Heart right ventricle (tissue), 16 donors: ENCODE measurements at regions of chr14 and their contacts with region 1.

Region 1: GRCh38 chr14:68248481-68249255 is 429.1 kb downstream of the RAD51B start:
- DNase-seq: peak; percentile 23 to 31
- ATAC-seq: peak; percentile 51 to 79 (median 73)
- H3K4me3 ChIP-seq: no peak overlapping the region
- H3K27ac ChIP-seq: peak overlapping the region in 9 of 10 donors; percentile 77 to 94 (median 85)
- H3K4me1 ChIP-seq: peaks cover 27 to 85% (median 81%) of the 10 kb centered on the region in 9 donors
- H3K27me3 ChIP-seq: no peaks in the 10 kb centered on the region
- CTCF ChIP-seq: peak; percentile 61 to 76 (median 63)

Region 2: DNA sequence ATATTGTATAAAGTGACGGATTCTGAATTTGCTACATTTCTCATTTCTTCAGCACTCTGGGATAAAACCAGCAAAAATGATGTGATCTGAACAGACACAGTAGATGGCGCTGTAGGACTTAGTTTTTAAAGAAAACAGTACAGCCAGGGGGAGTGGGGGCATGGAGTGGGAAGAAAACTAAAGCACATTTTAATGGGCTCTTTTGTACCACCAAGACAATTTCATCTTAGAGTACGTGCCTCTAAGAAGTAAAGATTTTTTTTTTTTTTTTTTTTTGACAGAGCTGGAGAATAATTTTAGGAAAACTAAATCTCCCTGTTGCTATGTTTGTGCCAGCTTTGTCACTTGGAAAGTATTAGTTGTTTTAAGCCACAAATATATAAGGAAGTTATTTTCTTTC is 304.7 kb before region 1 on chr14:
- intact Hi-C with region 1: loop called in 8 of 10 experiments (anchors 2 to 10 kb)
- DNase-seq: peak in 1 of 2 donors; percentile 86
- ATAC-seq: peak in 7 of 8 donors; percentile 53 to 73 (median 66)
- H3K4me3 ChIP-seq: no peak overlapping the region
- H3K27ac ChIP-seq: peak overlapping the region in 3 of 10 donors; percentile 35 to 76 (median 59)
- H3K4me1 ChIP-seq: peaks cover 0 to 56% (median 19%) of the 10 kb centered on the region in 9 donors
- H3K27me3 ChIP-seq: no peaks in the 10 kb centered on the region
- CTCF ChIP-seq: peak; percentile 59 to 85 (median 74)

Region 3: DNA sequence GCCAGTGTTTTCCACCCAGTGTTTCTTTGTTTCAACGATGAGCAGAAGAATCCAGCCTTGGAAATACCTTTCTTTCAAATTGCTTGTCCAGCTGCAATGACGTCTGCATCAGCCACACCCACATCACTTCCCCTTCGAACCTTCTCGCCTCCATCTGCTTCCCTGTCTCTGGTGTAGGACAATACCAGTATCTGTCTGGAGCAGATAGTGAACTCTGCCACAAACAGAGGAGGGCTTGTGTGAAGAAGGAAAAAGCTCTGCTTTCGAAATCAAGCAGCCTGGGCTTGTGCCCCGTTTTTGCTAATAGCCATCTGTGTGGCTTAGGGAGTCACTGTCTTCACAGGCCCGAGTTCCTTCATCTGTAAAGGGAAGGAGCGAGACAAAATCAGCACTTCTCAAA is 128.8 kb after region 1 on chr14:
- intact Hi-C with region 1: loop called in 1 of 10 experiments (anchors 10 kb)
- DNase-seq: peak; percentile 54 to 77
- ATAC-seq: peak; percentile 84 to 95 (median 90)
- H3K4me3 ChIP-seq: peak overlapping the region in 1 of 10 donors; percentile 2
- H3K27ac ChIP-seq: peak overlapping the region; percentile 54 to 89 (median 80)
- H3K4me1 ChIP-seq: peaks cover 4 to 76% (median 38%) of the 10 kb centered on the region in 9 donors
- H3K27me3 ChIP-seq: no peaks in the 10 kb centered on the region
- CTCF ChIP-seq: no peak

Region 4: DNA sequence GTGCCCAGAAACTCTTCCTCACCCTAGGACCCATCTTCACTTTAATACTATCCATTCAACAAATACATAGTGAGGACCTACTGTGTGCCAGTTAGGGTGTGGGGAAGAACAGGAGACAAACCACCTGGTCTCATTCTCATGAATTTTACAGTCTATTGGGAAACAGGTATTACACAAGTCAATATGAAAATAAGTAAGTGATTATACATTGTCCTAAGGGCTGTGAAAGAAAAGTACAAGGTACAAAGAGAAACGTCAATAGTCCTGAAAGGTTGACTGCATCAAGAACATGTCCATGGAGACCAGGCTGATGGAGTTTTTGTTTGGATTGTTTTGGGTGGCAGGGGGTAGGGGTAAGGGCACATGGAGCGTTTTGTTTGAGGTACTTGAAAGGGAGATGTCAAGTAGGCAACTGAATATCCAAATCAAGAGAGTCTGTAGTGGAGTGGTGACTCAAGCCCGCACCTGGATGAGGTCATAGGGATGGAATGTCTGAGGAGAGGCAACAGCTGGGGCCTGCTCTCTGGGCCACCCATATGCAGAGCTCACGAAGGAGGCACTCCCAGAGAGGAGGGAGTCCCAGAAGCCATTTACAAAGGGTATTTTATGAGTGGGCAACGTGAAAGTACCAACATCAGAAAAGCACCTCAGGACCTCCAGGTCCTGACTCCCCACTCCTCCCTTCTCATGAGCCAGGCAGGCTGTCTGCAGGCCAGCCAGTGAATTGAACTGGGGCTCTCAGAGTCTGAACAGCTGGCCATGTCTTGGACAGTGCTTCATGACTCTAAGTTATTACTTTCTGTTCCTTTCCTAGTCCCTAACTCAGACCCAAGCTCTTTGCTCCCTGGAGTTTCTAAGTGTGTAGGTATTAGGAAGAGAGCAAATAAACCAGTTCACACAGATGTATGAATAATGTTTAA is 272.2 kb after region 1 on chr14:
- intact Hi-C with region 1: loop called in 2 of 10 experiments (anchors 10 kb)
- DNase-seq: no peak
- ATAC-seq: peak in 2 of 8 donors; percentile 25 to 48
- H3K4me3 ChIP-seq: no peak overlapping the region
- H3K27ac ChIP-seq: peak overlapping the region in 7 of 10 donors; percentile 33 to 73 (median 67)
- H3K4me1 ChIP-seq: peaks cover 0 to 79% (median 58%) of the 10 kb centered on the region in 9 donors
- H3K27me3 ChIP-seq: no peaks in the 10 kb centered on the region
- CTCF ChIP-seq: no peak

Region 5: DNA sequence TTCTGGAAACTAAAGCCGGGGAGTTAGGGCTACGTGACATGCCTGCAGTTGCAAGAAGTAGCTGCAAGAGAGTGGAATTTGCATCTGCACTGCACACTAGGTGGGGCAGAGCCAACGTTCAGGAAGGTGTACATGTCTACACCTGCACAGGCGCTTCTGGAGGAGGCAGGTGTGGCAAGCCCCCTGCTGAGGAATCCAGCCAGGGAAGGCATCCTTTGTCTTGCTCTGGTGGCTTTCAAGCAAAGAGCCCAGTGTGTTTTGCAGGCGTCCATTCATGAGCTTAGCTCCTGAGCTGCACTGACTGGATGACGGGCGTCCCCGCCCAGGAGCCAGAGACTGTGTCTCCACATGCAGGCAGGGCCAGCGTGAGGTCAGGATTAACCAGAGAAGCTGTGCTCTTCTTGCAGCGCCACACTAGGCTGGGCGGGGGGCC is 427.9 kb after region 1 on chr14:
- intact Hi-C with region 1: loop called in 2 of 10 experiments (anchors 10 kb)
- DNase-seq: no peak
- ATAC-seq: no peak
- H3K4me3 ChIP-seq: no peak overlapping the region
- H3K27ac ChIP-seq: no peak overlapping the region
- H3K4me1 ChIP-seq: peaks cover 20 to 36% (median 32%) of the 10 kb centered on the region in 9 donors
- H3K27me3 ChIP-seq: no peaks in the 10 kb centered on the region
- CTCF ChIP-seq: no peak

Region 6: GRCh38 chr14:68795597-68796417 is 547.1 kb after region 1 on chr14:
- intact Hi-C with region 1: loop called in 7 of 10 experiments (anchors 2 to 5 kb)
- DNase-seq: peak; percentile 89 to 92
- ATAC-seq: peak; percentile 39 to 79 (median 48)
- H3K4me3 ChIP-seq: peak overlapping the region; percentile 60 to 93 (median 87)
- H3K27ac ChIP-seq: peak overlapping the region; percentile 99 to 100 (median 100)
- H3K4me1 ChIP-seq: peaks cover 0 to 36% (median 9%) of the 10 kb centered on the region in 9 donors
- H3K27me3 ChIP-seq: no peaks in the 10 kb centered on the region
- CTCF ChIP-seq: peak; percentile 66 to 87 (median 79)